ENCODE measurements at regions of chr1 and their contacts with region 1.

Region 1: GRCh38 chr1:3772027-3772714 is 378 bp upstream of the SMIM1 start:
- DNase-seq: peak; percentile 80
- H3K4me3 Mint-ChIP-seq: peak overlapping the region; percentile 75
- H3K27ac Mint-ChIP-seq: peak overlapping the region; percentile 52
- H3K4me1 Mint-ChIP-seq: peaks cover 8% of the 10 kb centered on the region
- H3K27me3 Mint-ChIP-seq: peaks cover 9% of the 10 kb centered on the region

Region 2: GRCh38 chr1:3649342-3650247 is 122.6 kb before region 1 on chr1 and contains the start of gene WRAP73:
- intact Hi-C with region 1: loop called (anchors 1 kb)
- DNase-seq: peak; percentile 86
- H3K4me3 Mint-ChIP-seq: peak within 1 kb of the TSS; percentile 84
- H3K27ac Mint-ChIP-seq: peak within 1 kb of the TSS; percentile 58
- H3K4me1 Mint-ChIP-seq: peaks cover 23% of the 10 kb centered on the region
- H3K27me3 Mint-ChIP-seq: peaks cover 25% of the 10 kb centered on the region
- total RNA-seq, gene WRAP73: 44.9 and 45.5 TPM in 2 replicates

Region 3: DNA sequence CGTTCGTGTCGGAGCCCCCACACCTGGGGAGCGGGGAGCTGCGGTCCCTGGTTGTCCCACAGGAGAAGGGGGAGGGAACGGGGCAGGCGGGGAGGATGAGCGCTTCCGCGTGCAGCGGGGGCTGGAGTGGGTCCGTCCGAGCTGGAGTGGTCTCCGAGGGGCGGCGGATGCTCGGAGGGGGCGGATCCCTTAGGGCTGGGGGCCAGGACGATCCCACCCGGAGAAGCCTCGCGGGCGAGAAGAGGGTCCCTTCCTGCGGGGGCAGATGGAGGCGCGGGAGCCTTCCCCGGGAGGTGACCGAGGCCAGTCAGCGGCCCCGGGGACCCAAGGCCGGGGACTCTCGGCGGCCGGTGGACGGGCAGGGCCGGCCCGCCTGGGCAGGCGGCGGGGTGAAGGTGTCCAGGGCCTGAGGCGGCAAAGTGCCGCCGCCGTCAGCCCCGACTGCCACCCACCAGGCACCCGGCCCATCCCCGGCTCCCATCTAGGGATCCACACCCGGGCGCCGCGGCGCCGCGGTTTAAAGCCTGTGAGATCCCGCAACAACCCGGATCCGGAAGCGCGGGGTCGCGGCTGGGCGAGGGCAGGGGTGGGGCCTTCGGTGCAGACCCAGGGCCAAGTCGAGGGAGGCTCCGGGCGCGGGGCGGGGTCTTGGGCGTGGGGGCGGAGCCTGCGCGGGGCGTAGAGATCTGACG is 25.2 kb before region 1 on chr1:
- intact Hi-C with region 1: loop called (anchors 1 kb)
- DNase-seq: peak; percentile 86
- H3K4me3 Mint-ChIP-seq: peak overlapping the region; percentile 84
- H3K27ac Mint-ChIP-seq: no peak overlapping the region
- H3K4me1 Mint-ChIP-seq: peaks cover 31% of the 10 kb centered on the region
- H3K27me3 Mint-ChIP-seq: peaks cover 2% of the 10 kb centered on the region

Measured in activated T-helper 1 cell treated with anti-CD3 and anti-CD28 coated beads, Interleukin-12 subunit alpha, Interleukin-12 subunit beta, Interleukin-2, Interleukin-4 antibody, amounts not matched to agents 30 ng/mL and 10 ng/mL and 1 ng/mL, durations not matched to agents 14 hours and 24 hours and 36 hours (primary cell).